ENCODE measurements at regions of chr20 and their contacts with region 1.

Region 1: GRCh38 chr20:23200918-23201317 is 114.8 kb upstream of the CD93 start:
- DNase-seq: no peak
- H3K4me3 ChIP-seq: no peak overlapping the region
- H3K27ac ChIP-seq: no peak overlapping the region
- H3K4me1 ChIP-seq: peaks cover 13 to 42% (median 16%) of the 10 kb centered on the region in 3 donors
- H3K27me3 ChIP-seq: no peaks in the 10 kb centered on the region
- CTCF ChIP-seq: peak in 5 of 6 experiments; percentile 53 to 90 (median 74)
- POLR2A ChIP-seq: no peak

Region 2: DNA sequence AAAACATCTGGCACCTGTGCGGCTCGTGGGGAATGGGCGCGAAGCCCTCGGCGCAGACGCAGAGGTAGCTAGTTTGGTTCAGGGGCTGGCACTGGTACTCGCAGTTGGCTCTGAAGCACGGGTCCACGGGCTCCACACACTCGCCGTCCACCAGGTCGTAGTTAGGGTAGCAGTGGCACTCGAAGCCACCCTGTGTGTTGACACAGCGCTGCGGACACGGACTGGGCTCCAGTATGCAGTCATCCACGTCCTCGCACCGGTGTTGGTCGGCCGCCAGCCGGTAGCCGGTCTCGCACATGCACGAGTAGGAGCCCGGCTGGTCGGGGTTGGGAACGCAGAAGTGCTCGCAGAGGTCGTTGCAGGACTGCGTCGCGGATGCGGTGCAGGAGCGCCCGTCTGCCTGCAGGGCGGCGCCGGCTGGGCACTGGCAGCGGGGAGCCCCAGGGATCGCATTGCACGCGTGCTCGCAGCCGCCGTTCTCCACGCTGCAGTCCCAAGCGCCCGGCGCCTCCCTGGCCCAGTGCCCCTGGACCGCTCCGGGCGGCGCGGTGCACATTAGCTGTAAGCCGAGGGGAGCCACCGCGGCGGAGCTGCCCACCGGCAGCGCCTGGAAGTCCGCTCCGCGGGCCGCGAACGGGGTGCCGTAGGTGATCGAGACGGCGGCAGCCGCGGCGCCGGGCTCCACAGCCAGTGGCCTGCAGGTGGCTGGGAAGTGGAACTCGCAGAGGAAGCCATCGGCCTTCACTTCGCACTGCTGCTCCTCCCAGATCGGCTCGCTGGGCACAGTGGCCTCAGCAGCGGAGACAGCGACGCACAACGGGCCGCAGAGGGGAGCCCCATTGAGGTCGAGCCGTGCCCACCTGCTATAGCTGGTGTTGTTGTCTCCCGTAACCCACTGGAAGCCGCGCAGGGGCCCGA is 152.4 kb before region 1 on chr20:
- intact Hi-C with region 1: loop called (anchors 10 kb)
- DNase-seq: no peak
- H3K4me3 ChIP-seq: peak overlapping the region; percentile 45 to 78 (median 66)
- H3K27ac ChIP-seq: peak overlapping the region; percentile 93 to 98 (median 96)
- H3K4me1 ChIP-seq: peaks cover 13 to 85% (median 28%) of the 10 kb centered on the region in 3 donors
- H3K27me3 ChIP-seq: peaks cover 0 to 77% (median 0%) of the 10 kb centered on the region in 4 donors
- CTCF ChIP-seq: peak in 5 of 6 experiments; percentile 47 to 87 (median 63)
- POLR2A ChIP-seq: peak in 1 of 4 donors; percentile 36

Measured in esophagus squamous epithelium (tissue), 5 donors.